ENCODE measurements at regions of chr1 and their contacts with region 1.

Region 1: GRCh38 chr1:118223426-118223825 is 38.4 kb upstream of the SPAG17 start:
- DNase-seq: peak in 1 of 4 experiments; percentile 10
- ATAC-seq: peak; percentile 54; the same call in 2 of the 3 replicates
- H3K4me3 ChIP-seq: no peak overlapping the region
- H3K27ac ChIP-seq: no peak overlapping the region
- H3K4me1 ChIP-seq: no peaks in the 10 kb centered on the region
- H3K27me3 ChIP-seq: no peaks in the 10 kb centered on the region
- CTCF ChIP-seq: peak; percentile 12 to 39 (median 37); a peak in 2 of 6 replicates
- EP300 ChIP-seq: no peak
- POLR2A ChIP-seq: no peak
- RAD21 ChIP-seq: peak; percentile 37 to 81; a peak in 3 of 4 replicates

Region 2: GRCh38 chr1:117981455-117982192 is 241.8 kb before region 1 on chr1:
- CTCF ChIA-PET with region 1: no interaction called
- POLR2A ChIA-PET with region 1: no interaction called
- in situ Hi-C with region 1: no loop called
- intact Hi-C with region 1: no loop called
- DNase-seq: no peak
- ATAC-seq: no peak
- H3K4me3 ChIP-seq: no peak overlapping the region
- H3K27ac ChIP-seq: no peak overlapping the region
- H3K4me1 ChIP-seq: no peaks in the 10 kb centered on the region
- H3K27me3 ChIP-seq: peaks cover 0 to 6% of the 10 kb centered on the region in 2 experiments; a peak in 1 of 5 replicates
- CTCF ChIP-seq: no peak
- EP300 ChIP-seq: no peak
- POLR2A ChIP-seq: no peak
- RAD21 ChIP-seq: no peak

Region 3: GRCh38 chr1:118049981-118050380 is 173.4 kb before region 1 on chr1:
- CTCF ChIA-PET with region 1: no interaction called
- POLR2A ChIA-PET with region 1: no interaction called
- in situ Hi-C with region 1: no loop called
- intact Hi-C with region 1: no loop called
- DNase-seq: peak in 1 of 4 experiments; percentile 49
- ATAC-seq: peak; percentile 86
- H3K4me3 ChIP-seq: no peak overlapping the region
- H3K27ac ChIP-seq: no peak overlapping the region
- H3K4me1 ChIP-seq: no peaks in the 10 kb centered on the region
- H3K27me3 ChIP-seq: no peaks in the 10 kb centered on the region
- CTCF ChIP-seq: no peak
- EP300 ChIP-seq: no peak
- POLR2A ChIP-seq: no peak
- RAD21 ChIP-seq: no peak

Region 4: GRCh38 chr1:118247593-118247992 is 24.2 kb after region 1 on chr1:
- CTCF ChIA-PET with region 1: no interaction called
- POLR2A ChIA-PET with region 1: no interaction called
- in situ Hi-C with region 1: no loop called
- intact Hi-C with region 1: no loop called
- DNase-seq: peak; percentile 18 to 26 (median 21)
- ATAC-seq: peak; percentile 81
- H3K4me3 ChIP-seq: no peak overlapping the region
- H3K27ac ChIP-seq: no peak overlapping the region
- H3K4me1 ChIP-seq: no peaks in the 10 kb centered on the region
- H3K27me3 ChIP-seq: no peaks in the 10 kb centered on the region
- CTCF ChIP-seq: peak; percentile 37 to 53 (median 38); a peak in 3 of 6 replicates
- EP300 ChIP-seq: no peak
- POLR2A ChIP-seq: no peak
- RAD21 ChIP-seq: peak in 1 of 2 experiments; percentile 56; a peak in 3 of 4 replicates

Region 5: DNA sequence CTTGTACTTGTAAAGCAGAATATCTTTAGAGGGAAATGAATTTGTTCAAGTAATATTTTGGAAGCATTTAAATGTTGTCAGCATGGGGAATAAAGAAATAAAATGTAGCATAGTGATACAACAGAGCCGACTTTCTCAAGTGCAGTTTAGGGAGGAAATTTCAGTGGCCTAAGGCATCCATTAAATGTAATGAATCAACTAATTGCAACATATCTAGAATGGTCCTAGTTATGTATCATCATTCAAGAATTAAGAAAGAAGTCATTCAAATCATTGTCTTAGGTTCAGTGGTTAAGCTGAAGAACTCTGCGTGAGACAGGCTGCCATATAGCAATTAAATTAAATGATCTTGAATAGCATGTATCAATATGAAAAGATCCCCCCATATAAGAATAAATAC is 404.0 kb after region 1 on chr1:
- CTCF ChIA-PET with region 1: no interaction called
- POLR2A ChIA-PET with region 1: no interaction called
- in situ Hi-C with region 1: no loop called
- intact Hi-C with region 1: no loop called
- DNase-seq: no peak
- ATAC-seq: no peak
- H3K4me3 ChIP-seq: no peak overlapping the region
- H3K27ac ChIP-seq: no peak overlapping the region
- H3K4me1 ChIP-seq: no peaks in the 10 kb centered on the region
- H3K27me3 ChIP-seq: no peaks in the 10 kb centered on the region
- CTCF ChIP-seq: no peak
- EP300 ChIP-seq: no peak
- POLR2A ChIP-seq: no peak
- RAD21 ChIP-seq: no peak

Region 6: GRCh38 chr1:119008483-119009311 is 785.3 kb after region 1 on chr1:
- CTCF ChIA-PET with region 1: no interaction called
- POLR2A ChIA-PET with region 1: no interaction called
- in situ Hi-C with region 1: no loop called
- intact Hi-C with region 1: loop called (anchors 5 kb)
- DNase-seq: peak; percentile 39 to 62 (median 42)
- ATAC-seq: peak; percentile 85
- H3K4me3 ChIP-seq: no peak overlapping the region
- H3K27ac ChIP-seq: no peak overlapping the region
- H3K4me1 ChIP-seq: peaks cover 0 to 10% of the 10 kb centered on the region in 2 experiments; a peak in 1 of 5 replicates
- H3K27me3 ChIP-seq: peaks cover 11 to 35% of the 10 kb centered on the region in 2 experiments; a peak in 3 of 5 replicates
- CTCF ChIP-seq: peak; percentile 45 to 72 (median 61); a peak in 5 of 6 replicates
- EP300 ChIP-seq: no peak
- POLR2A ChIP-seq: no peak
- RAD21 ChIP-seq: peak; percentile 91

Measured in K562 (cell line).